A549 (cell line): ENCODE measurements at regions of chr4 and their contacts with region 1.

Region 1: DNA sequence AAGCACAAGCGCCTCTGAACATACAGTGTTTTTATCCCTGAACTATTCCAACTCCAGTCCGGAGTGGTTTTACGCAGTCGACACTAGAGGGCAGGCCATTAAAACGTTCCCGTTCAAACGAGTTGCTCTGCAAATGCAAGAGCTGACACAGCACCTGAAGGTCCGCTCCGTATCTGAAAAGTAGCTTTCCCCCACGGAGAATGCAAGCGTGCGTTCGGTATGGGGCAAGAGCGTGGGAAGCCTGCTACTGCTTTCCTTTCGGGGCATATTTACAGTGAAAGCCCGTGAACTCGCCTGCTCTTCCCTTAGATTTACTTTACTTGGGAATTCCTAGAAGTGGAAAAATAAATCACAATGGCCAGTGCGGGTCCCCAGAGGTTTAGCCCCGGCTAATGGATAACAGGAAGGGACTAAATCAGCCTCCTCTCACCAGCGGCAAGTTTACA is 190.8 kb downstream of the TSPAN5 start:
- DNase-seq: peak; percentile 57 to 86
- ATAC-seq: peak; percentile 97 to 99
- H3K4me3 ChIP-seq: peak overlapping the region; percentile 40
- H3K27ac ChIP-seq: peak overlapping the region; percentile 52 to 86
- H3K4me1 ChIP-seq: no peaks in the 10 kb centered on the region
- CTCF ChIP-seq: peak; percentile 64
- EP300 ChIP-seq: no peak
- POLR2A ChIP-seq: no peak
- RAD21 ChIP-seq: peak; percentile 89 to 90

Region 2: DNA sequence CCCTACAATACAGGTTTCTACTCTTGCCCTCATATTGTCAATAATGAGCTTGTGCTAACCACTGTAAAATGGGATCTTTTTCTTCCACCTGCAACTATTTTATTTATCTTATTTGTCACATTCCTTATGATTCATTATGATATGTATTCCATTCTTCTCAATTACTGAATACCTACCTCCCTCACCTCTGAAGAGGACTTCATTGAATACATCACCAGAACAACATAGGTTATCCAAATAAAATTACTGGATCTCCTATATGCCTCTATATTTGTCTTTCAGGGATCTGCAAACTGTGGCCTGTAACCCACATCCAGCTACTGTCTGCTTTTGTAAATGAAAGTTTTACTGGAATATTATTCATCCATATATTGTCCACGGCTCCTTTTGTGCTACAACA is 365.7 kb before region 1 on chr4:
- CTCF ChIA-PET with region 1: no interaction called
- POLR2A ChIA-PET with region 1: no interaction called
- DNase-seq: no peak
- ATAC-seq: no peak
- H3K4me3 ChIP-seq: no peak overlapping the region
- H3K27ac ChIP-seq: no peak overlapping the region
- H3K4me1 ChIP-seq: no peaks in the 10 kb centered on the region
- CTCF ChIP-seq: no peak
- EP300 ChIP-seq: no peak
- POLR2A ChIP-seq: no peak
- RAD21 ChIP-seq: no peak

Region 3: DNA sequence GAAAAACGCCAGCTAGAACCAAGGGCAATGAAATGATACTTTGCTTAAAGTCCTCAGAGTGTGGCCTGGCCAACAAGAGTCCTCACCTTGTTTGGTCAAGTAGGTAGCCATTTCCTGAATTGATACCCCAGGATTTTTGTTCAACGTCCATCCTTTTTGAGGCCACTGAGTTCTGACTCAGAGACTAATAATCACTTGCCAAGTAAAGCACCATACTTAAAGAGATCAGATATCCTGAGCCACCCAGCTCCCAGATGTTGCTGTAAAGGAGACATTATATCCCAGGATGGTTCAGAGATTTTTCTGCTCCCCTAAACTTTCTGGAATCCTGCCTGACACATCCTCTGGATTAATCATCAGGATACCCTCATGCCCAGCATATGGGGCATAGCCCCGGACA is 15.6 kb before region 1 on chr4:
- CTCF ChIA-PET with region 1: interaction called, 19 read pairs
- POLR2A ChIA-PET with region 1: no interaction called
- DNase-seq: no peak
- ATAC-seq: no peak
- H3K4me3 ChIP-seq: no peak overlapping the region
- H3K27ac ChIP-seq: no peak overlapping the region
- H3K4me1 ChIP-seq: no peaks in the 10 kb centered on the region
- CTCF ChIP-seq: no peak
- EP300 ChIP-seq: no peak
- POLR2A ChIP-seq: no peak
- RAD21 ChIP-seq: no peak

Region 4: GRCh38 chr4:98482847-98483806 is 15.5 kb after region 1 on chr4:
- CTCF ChIA-PET with region 1: interaction called, 11 read pairs
- POLR2A ChIA-PET with region 1: interaction called, 3 read pairs
- DNase-seq: peak; percentile 46 to 72
- ATAC-seq: peak; percentile 81 to 86
- H3K4me3 ChIP-seq: peak overlapping the region; percentile 21; the same call in 1 of the 3 replicates
- H3K27ac ChIP-seq: peak overlapping the region; percentile 86
- H3K4me1 ChIP-seq: peaks cover 45% of the 10 kb centered on the region
- CTCF ChIP-seq: no peak
- EP300 ChIP-seq: peak; percentile 51 to 56; a peak in 2 of 5 replicates
- POLR2A ChIP-seq: no peak
- RAD21 ChIP-seq: no peak; a peak in 1 of 5 replicates

Region 5: GRCh38 chr4:98658287-98659105 is 190.8 kb after region 1 on chr4 and contains the start of gene TSPAN5:
- CTCF ChIA-PET with region 1: interaction called, 20 read pairs
- POLR2A ChIA-PET with region 1: no interaction called
- DNase-seq: peak; percentile 52 to 73
- ATAC-seq: peak; percentile 87 to 90
- H3K4me3 ChIP-seq: peak within 1 kb of the TSS; percentile 62
- H3K27ac ChIP-seq: peak within 1 kb of the TSS; percentile 78 to 93
- H3K4me1 ChIP-seq: peaks cover 54% of the 10 kb centered on the region
- CTCF ChIP-seq: no peak
- EP300 ChIP-seq: no peak
- POLR2A ChIP-seq: peak; percentile 18
- RAD21 ChIP-seq: no peak
- polyA plus RNA-seq, gene TSPAN5: 10.6 and 12.4 TPM in 2 replicates